ENCODE measurements at regions of chr10 and their contacts with region 1.

Region 1: GRCh38 chr10:20004087-20004523 is 187.9 kb downstream of the PLXDC2 start:
- DNase-seq: peak; percentile 43
- H3K4me3 ChIP-seq: no peak overlapping the region
- H3K27ac ChIP-seq: peak overlapping the region; percentile 93
- H3K4me1 ChIP-seq: peaks cover 18% of the 10 kb centered on the region
- H3K27me3 ChIP-seq: no peaks in the 10 kb centered on the region
- CTCF ChIP-seq: no peak

Region 2: DNA sequence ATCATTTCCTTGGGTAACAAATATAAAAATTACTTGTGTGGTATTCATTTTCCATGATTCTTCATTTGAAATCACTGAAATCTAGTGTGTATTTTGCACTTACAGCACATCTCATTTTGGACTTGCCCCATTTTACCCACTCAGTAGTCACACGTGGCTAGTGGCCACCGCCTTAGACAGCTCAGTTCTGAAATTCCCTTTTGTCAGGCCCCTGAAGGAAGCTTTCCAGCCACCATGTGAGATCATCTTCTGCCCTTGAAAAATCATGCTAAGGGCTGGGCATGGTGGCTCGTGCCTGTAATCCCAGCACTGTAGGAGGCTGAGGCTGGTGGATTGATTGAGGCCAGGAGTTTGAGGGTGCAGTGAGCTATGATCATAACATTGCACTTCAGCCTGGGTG is 108.6 kb before region 1 on chr10:
- CTCF ChIA-PET with region 1: no interaction called
- dilution Hi-C with region 1: loop called (anchors 5 kb)
- in situ Hi-C with region 1: no loop called
- intact Hi-C with region 1: no loop called
- DNase-seq: no peak
- H3K4me3 ChIP-seq: no peak overlapping the region
- H3K27ac ChIP-seq: no peak overlapping the region
- H3K4me1 ChIP-seq: no peaks in the 10 kb centered on the region
- H3K27me3 ChIP-seq: no peaks in the 10 kb centered on the region
- CTCF ChIP-seq: no peak

Region 3: GRCh38 chr10:20185116-20185515 is 181.0 kb after region 1 on chr10:
- CTCF ChIA-PET with region 1: no interaction called
- dilution Hi-C with region 1: no loop called
- in situ Hi-C with region 1: no loop called
- intact Hi-C with region 1: no loop called
- DNase-seq: no peak
- H3K4me3 ChIP-seq: no peak overlapping the region
- H3K27ac ChIP-seq: no peak overlapping the region
- H3K4me1 ChIP-seq: no peaks in the 10 kb centered on the region
- H3K27me3 ChIP-seq: no peaks in the 10 kb centered on the region
- CTCF ChIP-seq: no peak

Region 4: DNA sequence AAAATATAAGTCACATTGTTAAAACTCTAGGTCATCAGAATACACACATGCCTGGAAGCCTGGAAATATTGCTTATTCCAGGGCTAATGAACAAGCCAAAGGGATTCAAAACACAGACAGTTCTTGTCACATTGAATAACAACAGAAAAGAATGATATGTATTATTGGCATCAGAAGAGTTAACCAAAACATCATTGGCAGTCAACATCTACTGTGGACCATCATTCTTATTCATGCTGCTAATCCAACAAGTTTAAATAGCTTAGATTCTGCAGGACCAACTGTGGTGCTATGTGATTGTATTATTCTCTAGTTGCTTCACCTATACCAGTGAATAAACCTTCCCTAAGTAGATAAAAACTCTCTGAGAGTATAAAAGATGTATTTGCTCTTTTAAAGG is 694.7 kb after region 1 on chr10:
- CTCF ChIA-PET with region 1: no interaction called
- dilution Hi-C with region 1: no loop called
- in situ Hi-C with region 1: no loop called
- intact Hi-C with region 1: no loop called
- DNase-seq: no peak
- H3K4me3 ChIP-seq: no peak overlapping the region
- H3K27ac ChIP-seq: no peak overlapping the region
- H3K4me1 ChIP-seq: no peaks in the 10 kb centered on the region
- H3K27me3 ChIP-seq: no peaks in the 10 kb centered on the region
- CTCF ChIP-seq: no peak